Lower lobe of right lung (tissue), 2 donors: ENCODE measurements at regions of chr9 and their contacts with region 1.

Region 1: GRCh38 chr9:33721674-33722358 is 73.5 kb upstream of the PRSS3 start:
- DNase-seq: peak; percentile 93
- ATAC-seq: peak; percentile 90 to 98
- H3K4me3 ChIP-seq: no peak overlapping the region
- H3K27ac ChIP-seq: no peak overlapping the region
- H3K4me1 ChIP-seq: peaks cover 19% of the 10 kb centered on the region
- H3K27me3 ChIP-seq: no peaks in the 10 kb centered on the region
- CTCF ChIP-seq: peak; percentile 100

Region 2: GRCh38 chr9:33628865-33629410 is 92.9 kb before region 1 on chr9:
- intact Hi-C with region 1: loop called (anchors 5 kb)
- DNase-seq: no peak
- ATAC-seq: no peak
- H3K4me3 ChIP-seq: no peak overlapping the region
- H3K27ac ChIP-seq: no peak overlapping the region
- H3K4me1 ChIP-seq: peaks cover under 1% of the 10 kb centered on the region
- H3K27me3 ChIP-seq: peaks cover 20% of the 10 kb centered on the region
- CTCF ChIP-seq: no peak